Activated naive CD4-positive, alpha-beta T cell treated with anti-CD3 and anti-CD28 coated beads, Interleukin-2, amount 10 ng/mL, durations not matched to agents 7 days and 5 days (primary cell): ENCODE measurements at regions of chr6 and their contacts with region 1.

Region 1: GRCh38 chr6:11653028-11653583 is 115.6 kb downstream of the TMEM170B start:
- DNase-seq: peak; percentile 64
- H3K4me3 Mint-ChIP-seq: no peak overlapping the region
- H3K27ac Mint-ChIP-seq: peak overlapping the region; percentile 7
- H3K4me1 Mint-ChIP-seq: peaks cover 17% of the 10 kb centered on the region
- H3K27me3 Mint-ChIP-seq: peaks cover 8% of the 10 kb centered on the region

Region 2: DNA sequence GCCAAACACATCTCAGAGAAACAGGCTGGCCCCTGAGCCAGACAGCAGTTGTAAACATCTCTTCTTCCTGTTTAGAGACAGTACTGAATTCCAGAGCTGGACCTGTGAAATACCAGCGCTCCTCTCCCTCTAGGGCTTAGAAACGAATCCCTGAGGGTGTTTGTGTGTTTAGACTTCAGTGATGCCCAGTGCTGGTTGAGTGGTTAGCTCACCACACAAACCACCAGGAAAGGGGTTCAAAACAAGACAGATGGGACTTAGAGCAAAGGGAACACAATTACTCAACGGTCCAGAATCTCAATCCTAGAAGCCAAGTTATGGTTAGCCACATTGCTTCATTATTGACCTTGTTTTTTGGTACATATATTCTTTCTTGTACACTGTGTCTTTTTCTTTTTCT is 224.2 kb before region 1 on chr6:
- CTCF ChIA-PET with region 1: no interaction called
- DNase-seq: no peak
- H3K4me3 Mint-ChIP-seq: no peak overlapping the region
- H3K27ac Mint-ChIP-seq: no peak overlapping the region
- H3K4me1 Mint-ChIP-seq: peaks cover 16% of the 10 kb centered on the region
- H3K27me3 Mint-ChIP-seq: peaks cover 7% of the 10 kb centered on the region

Region 3: DNA sequence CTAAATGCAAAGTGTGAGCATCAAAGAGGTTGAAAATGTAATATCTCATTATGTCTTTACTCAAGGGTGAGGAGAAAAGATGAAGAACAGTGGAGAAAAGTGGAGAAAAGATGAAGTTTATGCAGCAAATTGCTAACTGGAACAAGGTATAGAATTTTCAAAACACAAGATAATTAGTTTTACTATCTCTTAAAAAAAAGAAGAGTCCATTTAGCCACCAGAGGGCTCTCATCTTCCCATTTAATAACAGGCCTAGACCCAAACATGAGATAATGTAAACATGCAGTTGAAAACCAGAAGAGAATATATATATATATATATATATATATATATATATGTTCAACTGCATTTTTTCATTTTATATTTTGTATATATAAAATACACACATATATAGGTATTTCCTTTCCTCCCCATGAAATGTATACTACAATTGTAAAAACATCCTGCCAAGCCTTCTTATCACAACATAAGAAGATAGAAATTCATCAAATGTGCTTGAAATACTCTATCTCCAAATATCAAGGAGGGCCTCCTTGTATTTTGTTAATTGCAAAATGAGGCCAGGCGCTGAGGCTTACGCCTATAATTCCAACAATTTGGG is 47.1 kb after region 1 on chr6:
- CTCF ChIA-PET with region 1: interaction called, 10 read pairs
- DNase-seq: no peak
- H3K4me3 Mint-ChIP-seq: no peak overlapping the region
- H3K27ac Mint-ChIP-seq: no peak overlapping the region
- H3K4me1 Mint-ChIP-seq: no peaks in the 10 kb centered on the region
- H3K27me3 Mint-ChIP-seq: no peaks in the 10 kb centered on the region

Region 4: GRCh38 chr6:12233693-12234571 is 580.8 kb after region 1 on chr6:
- CTCF ChIA-PET with region 1: interaction called, 23 read pairs
- DNase-seq: peak; percentile 50
- H3K4me3 Mint-ChIP-seq: no peak overlapping the region
- H3K27ac Mint-ChIP-seq: no peak overlapping the region
- H3K4me1 Mint-ChIP-seq: peaks cover 27% of the 10 kb centered on the region
- H3K27me3 Mint-ChIP-seq: no peaks in the 10 kb centered on the region

Region 5: DNA sequence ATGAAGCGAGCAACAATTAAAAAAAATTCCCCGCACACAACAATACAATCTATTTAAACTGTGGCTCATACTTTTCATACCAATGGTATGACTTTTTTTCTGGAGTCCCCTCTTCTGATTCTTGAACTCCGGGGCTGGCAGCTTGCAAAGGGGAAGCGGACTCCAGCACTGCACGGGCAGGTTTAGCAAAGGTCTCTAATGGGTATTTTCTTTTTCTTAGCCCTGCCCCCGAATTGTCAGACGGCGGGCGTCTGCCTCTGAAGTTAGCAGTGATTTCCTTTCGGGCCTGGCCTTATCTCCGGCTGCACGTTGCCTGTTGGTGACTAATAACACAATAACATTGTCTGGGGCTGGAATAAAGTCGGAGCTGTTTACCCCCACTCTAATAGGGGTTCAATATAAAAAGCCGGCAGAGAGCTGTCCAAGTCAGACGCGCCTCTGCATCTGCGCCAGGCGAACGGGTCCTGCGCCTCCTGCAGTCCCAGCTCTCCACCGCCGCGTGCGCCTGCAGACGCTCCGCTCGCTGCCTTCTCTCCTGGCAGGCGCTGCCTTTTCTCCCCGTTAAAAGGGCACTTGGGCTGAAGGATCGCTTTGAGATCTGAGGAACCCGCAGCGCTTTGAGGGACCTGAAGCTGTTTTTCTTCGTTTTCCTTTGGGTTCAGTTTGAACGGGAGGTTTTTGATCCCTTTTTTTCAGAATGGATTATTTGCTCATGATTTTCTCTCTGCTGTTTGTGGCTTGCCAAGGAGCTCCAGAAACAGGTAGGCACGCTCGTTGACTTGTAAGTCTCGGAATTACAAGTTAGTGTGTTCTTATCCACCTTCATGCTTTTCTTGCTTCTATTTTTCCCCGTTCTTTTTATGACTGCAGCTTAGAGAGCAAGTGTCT is 637.1 kb after region 1 on chr6 and contains the start of gene EDN1:
- CTCF ChIA-PET with region 1: interaction called, 44 read pairs
- DNase-seq: peak; percentile 60
- H3K4me3 Mint-ChIP-seq: peak within 1 kb of the TSS; percentile 79
- H3K27ac Mint-ChIP-seq: no peak within 1 kb of the TSS
- H3K4me1 Mint-ChIP-seq: peaks cover 17% of the 10 kb centered on the region
- H3K27me3 Mint-ChIP-seq: peaks cover 60% of the 10 kb centered on the region